Posterior vena cava (tissue), 2 donors: ENCODE measurements at regions of chr2 and their contacts with region 1.

Region 1: DNA sequence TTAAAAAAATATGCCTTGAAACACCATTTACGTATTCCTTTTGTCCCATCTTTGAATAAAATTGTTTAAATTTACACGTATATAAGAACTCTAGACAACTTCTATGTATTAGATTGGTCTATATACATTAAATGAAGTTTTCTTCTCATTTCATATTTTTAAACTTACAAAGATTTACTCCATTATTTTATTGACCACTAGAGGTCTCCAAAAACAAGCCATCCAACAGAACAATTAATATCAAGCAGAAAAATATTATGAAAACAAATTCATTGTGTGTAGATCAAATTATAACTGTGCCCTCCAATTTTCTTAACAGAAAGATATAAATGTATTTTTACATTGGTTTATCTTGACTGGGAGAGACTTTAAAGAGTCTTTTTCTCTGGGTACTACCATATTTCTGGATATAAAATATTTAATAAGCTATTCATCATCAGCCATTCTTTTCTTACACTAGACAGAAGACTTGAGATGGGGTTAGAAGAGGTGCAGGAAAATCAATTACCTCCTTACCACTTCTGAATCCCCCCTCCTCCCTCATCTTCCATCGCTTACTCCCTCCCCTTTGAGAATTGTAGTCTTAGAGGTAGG is 66.5 kb downstream of the DPP4 start:
- DNase-seq: no peak

Region 2: GRCh38 chr2:161975062-161975812 is 32.3 kb before region 1 on chr2:
- intact Hi-C with region 1: no loop called
- DNase-seq: no peak

Region 3: GRCh38 chr2:162123806-162124758 is 116.5 kb after region 1 on chr2:
- intact Hi-C with region 1: loop called (anchors 5 to 10 kb)
- DNase-seq: no peak